K562 (cell line): ENCODE measurements at regions of chr1 and their contacts with region 1.

Region 1: GRCh38 chr1:210647406-210648333 is 319.0 kb downstream of the HHAT start:
- DNase-seq: no peak
- ATAC-seq: no peak
- H3K4me3 ChIP-seq: no peak overlapping the region
- H3K27ac ChIP-seq: no peak overlapping the region
- H3K4me1 ChIP-seq: no peaks in the 10 kb centered on the region
- H3K27me3 ChIP-seq: peaks cover 0 to 6% of the 10 kb centered on the region in 2 experiments; a peak in 2 of 5 replicates
- CTCF ChIP-seq: no peak
- EP300 ChIP-seq: no peak
- POLR2A ChIP-seq: no peak
- RAD21 ChIP-seq: no peak

Region 2: DNA sequence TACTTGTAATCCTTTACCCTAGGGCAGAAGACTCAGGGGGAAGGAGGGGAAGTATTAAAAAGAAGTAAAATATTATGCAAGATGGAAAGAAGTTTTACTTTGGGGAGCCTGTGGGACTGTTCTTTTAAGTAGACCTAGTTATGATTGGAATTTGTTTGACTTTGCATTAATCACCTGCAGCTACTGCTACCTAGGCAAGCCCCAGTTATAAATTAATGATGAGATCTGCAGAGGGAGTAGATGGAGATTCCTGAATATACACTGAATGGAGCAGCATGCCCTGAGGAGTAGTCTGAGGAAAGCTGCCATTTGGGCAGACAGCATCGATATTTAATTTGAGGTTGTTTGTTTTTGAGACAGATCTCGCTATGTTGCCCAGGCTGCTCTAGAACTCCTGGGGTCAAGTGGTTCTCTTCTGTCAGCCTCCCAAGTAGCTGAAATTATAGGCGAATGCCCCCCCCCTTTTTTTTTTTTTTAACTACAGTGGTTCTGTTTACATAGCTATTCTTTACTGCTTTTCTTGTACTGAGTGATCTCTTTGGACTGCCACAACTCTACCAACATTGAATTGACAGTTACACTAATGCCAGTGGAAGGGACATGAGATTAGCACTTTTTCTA is 496.5 kb before region 1 on chr1:
- CTCF ChIA-PET with region 1: no interaction called
- POLR2A ChIA-PET with region 1: no interaction called
- in situ Hi-C with region 1: loop called (anchors 5 kb)
- intact Hi-C with region 1: no loop called
- DNase-seq: no peak
- ATAC-seq: no peak
- H3K4me3 ChIP-seq: no peak overlapping the region
- H3K27ac ChIP-seq: no peak overlapping the region
- H3K4me1 ChIP-seq: no peaks in the 10 kb centered on the region
- H3K27me3 ChIP-seq: no peaks in the 10 kb centered on the region
- CTCF ChIP-seq: no peak
- EP300 ChIP-seq: no peak
- POLR2A ChIP-seq: no peak
- RAD21 ChIP-seq: no peak

Region 3: DNA sequence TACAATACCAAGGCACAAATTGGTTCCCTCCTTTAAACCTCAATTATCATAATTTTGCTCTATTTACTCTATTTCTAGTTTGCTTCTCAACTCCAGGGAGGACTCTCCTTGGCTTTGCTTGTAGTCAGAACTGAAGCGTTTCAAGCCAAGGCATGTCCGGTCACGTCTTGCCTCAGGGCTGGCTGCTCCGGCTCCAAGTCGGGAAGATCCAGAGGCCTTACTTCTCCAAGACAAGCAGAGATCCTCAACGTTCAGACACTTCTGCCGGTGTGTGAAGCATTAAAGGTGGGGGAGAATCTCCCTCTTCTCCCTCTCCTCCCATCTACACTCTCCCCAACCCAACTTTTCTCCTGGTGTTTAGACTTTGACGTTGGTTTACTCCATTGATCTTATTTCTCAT is 326.1 kb before region 1 on chr1:
- CTCF ChIA-PET with region 1: no interaction called
- POLR2A ChIA-PET with region 1: no interaction called
- in situ Hi-C with region 1: no loop called
- intact Hi-C with region 1: no loop called
- DNase-seq: no peak
- ATAC-seq: no peak
- H3K4me3 ChIP-seq: no peak overlapping the region
- H3K27ac ChIP-seq: no peak overlapping the region
- H3K4me1 ChIP-seq: no peaks in the 10 kb centered on the region
- H3K27me3 ChIP-seq: no peaks in the 10 kb centered on the region
- CTCF ChIP-seq: no peak
- EP300 ChIP-seq: no peak
- POLR2A ChIP-seq: no peak
- RAD21 ChIP-seq: no peak

Region 4: GRCh38 chr1:210464519-210465039 is 183.1 kb before region 1 on chr1:
- CTCF ChIA-PET with region 1: no interaction called
- POLR2A ChIA-PET with region 1: no interaction called
- in situ Hi-C with region 1: no loop called
- intact Hi-C with region 1: no loop called
- DNase-seq: no peak
- ATAC-seq: no peak; the same call in 2 of the 3 replicates
- H3K4me3 ChIP-seq: no peak overlapping the region
- H3K27ac ChIP-seq: no peak overlapping the region
- H3K4me1 ChIP-seq: no peaks in the 10 kb centered on the region
- H3K27me3 ChIP-seq: 0 out of 5 replicates have a peak, but pooled peaks cover 0 to 4% of the 10 kb centered on the region in 2 experiments
- CTCF ChIP-seq: no peak
- EP300 ChIP-seq: no peak
- POLR2A ChIP-seq: no peak
- RAD21 ChIP-seq: no peak